Activated CD4-positive, alpha-beta T cell treated with anti-CD3 and anti-CD28 coated beads, Interleukin-2, amount 10 ng/mL, durations not matched to agents 24 days and 14 days (primary cell): ENCODE measurements at regions of chr19 and their contacts with region 1.

Region 1: DNA sequence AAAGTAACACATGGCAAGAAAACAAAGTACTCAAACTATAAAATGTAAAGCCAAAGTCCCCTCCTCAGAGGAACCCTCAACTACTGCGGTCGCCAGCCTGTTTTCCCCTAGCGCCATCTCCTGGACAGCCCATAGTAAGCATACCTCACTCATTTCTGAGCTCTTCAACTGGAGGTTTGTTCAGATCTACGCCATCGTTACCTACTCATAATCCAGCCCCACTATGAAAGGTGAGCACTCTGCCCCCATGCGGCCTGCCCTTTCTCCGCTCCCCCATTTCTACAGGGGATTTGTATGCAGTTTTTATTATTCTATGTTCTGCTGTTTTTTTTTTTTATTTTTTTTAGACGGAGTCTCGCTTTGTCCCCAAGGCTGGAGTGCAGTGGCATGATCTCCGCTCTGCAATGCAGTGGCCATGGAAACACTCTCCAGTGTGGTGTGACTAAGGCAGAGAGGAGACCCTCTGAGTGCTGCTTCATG is 26.2 kb downstream of the OPA3 start:
- DNase-seq: peak; percentile 91
- H3K4me3 Mint-ChIP-seq: no peak overlapping the region
- H3K27ac Mint-ChIP-seq: no peak overlapping the region
- H3K4me1 Mint-ChIP-seq: peaks cover 14% of the 10 kb centered on the region
- H3K27me3 Mint-ChIP-seq: no peaks in the 10 kb centered on the region

Region 2: DNA sequence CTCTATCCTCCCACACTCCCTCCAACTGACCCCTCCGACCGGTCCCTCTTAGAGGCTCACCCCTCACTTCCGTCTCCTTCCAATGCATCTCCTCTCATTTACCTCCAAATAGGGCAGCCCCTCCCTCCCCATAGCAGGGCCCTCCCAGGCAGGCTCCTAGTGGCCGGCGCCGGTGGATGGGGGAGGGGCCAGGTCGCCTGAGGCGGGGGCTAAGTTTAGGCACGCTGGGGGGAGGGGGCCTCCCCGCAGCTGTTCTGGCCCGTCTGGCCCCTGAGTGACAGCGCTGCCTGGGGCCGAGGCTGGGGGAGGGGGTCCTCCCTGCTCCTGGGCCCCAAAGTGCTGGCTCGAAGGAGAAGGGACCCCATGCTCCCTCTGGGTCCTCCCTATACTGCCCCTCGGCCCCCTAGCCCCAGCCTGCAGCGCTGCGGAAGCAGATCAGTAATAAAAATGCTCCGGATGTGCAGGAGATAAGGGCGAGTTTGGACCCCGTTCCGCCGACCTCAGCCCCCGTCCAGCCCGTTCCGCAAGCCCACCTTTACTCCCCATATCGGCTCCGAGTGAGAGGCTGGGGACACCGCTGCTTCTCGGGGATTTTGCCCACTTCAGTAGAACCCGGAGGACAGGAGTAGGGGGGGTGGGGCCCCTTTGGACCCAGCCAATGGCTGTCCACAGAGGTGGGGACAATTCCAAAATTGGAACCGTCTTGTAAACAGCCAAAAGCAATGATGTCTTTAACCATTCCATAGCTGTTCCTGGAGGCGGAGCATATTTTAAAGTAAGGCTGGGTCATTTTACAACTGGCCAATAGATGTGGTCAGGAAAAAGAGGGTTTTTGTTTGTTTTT is 65.6 kb before region 1 on chr19:
- intact Hi-C with region 1: loop called (anchors 1 kb)
- DNase-seq: peak; percentile 78
- H3K4me3 Mint-ChIP-seq: peak overlapping the region; percentile 82
- H3K27ac Mint-ChIP-seq: peak overlapping the region; percentile 43
- H3K4me1 Mint-ChIP-seq: peaks cover 20% of the 10 kb centered on the region
- H3K27me3 Mint-ChIP-seq: peaks cover 21% of the 10 kb centered on the region

Region 3: DNA sequence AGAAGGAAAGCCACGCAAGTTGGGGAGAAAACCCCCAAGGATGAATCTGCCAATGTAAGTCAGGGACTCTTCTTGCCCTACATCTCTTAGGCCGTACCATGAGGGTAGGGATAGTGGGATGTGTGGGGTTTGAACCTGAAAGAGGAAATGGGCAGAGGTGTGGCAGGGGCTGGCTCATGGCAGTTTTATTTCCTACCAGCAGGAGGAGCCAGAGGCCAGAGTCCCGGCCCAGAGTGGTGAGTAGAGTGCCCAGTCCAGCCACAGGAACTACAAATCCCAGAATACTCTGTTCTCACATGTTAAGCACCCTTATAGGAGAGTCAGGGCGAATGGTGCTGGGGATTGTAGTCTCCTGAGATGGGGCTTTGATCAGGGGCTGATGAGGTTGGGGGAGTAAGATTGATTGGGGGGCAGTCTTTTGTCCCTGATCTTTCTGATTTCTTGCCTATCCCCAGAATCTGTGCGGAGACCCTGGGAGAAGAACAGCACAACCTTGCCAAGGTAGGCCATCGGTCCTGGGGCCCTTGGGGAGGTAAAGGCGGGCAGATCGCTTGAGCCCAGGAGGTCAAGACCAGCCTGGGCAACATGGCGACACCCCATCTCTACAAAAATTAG is 34.7 kb before region 1 on chr19:
- intact Hi-C with region 1: loop called (anchors 5 kb)
- DNase-seq: peak; percentile 92
- H3K4me3 Mint-ChIP-seq: no peak overlapping the region
- H3K27ac Mint-ChIP-seq: peak overlapping the region; percentile 53
- H3K4me1 Mint-ChIP-seq: peaks cover 18% of the 10 kb centered on the region
- H3K27me3 Mint-ChIP-seq: no peaks in the 10 kb centered on the region